Caco-2 (cell line): ENCODE measurements at regions of chr3 and their contacts with region 1.

Region 1: GRCh38 chr3:5226783-5227182 is 39.3 kb downstream of the EDEM1 start:
- DNase-seq: no peak
- H3K4me3 ChIP-seq: no peak overlapping the region
- H3K4me3 Mint-ChIP-seq: no peak overlapping the region
- H3K27ac Mint-ChIP-seq: no peak overlapping the region
- H3K4me1 ChIP-seq: no peaks in the 10 kb centered on the region
- H3K4me1 Mint-ChIP-seq: peaks cover 6% of the 10 kb centered on the region
- H3K27me3 ChIP-seq: no peaks in the 10 kb centered on the region
- H3K27me3 Mint-ChIP-seq: no peaks in the 10 kb centered on the region
- CTCF ChIP-seq: peak in 1 of 2 experiments; percentile 45

Region 2: GRCh38 chr3:5250467-5251195 is 23.8 kb after region 1 on chr3:
- CTCF ChIA-PET with region 1: no interaction called
- POLR2A ChIA-PET with region 1: no interaction called
- intact Hi-C with region 1: no loop called
- DNase-seq: peak in 1 of 2 experiments; percentile 6
- H3K4me3 ChIP-seq: no peak overlapping the region
- H3K4me3 Mint-ChIP-seq: peak overlapping the region; percentile 66
- H3K27ac Mint-ChIP-seq: no peak overlapping the region
- H3K4me1 ChIP-seq: 0 out of 2 replicates have a peak, but pooled peaks cover 5% of the 10 kb centered on the region
- H3K4me1 Mint-ChIP-seq: no peaks in the 10 kb centered on the region
- H3K27me3 ChIP-seq: no peaks in the 10 kb centered on the region
- H3K27me3 Mint-ChIP-seq: no peaks in the 10 kb centered on the region
- CTCF ChIP-seq: no peak

Region 3: DNA sequence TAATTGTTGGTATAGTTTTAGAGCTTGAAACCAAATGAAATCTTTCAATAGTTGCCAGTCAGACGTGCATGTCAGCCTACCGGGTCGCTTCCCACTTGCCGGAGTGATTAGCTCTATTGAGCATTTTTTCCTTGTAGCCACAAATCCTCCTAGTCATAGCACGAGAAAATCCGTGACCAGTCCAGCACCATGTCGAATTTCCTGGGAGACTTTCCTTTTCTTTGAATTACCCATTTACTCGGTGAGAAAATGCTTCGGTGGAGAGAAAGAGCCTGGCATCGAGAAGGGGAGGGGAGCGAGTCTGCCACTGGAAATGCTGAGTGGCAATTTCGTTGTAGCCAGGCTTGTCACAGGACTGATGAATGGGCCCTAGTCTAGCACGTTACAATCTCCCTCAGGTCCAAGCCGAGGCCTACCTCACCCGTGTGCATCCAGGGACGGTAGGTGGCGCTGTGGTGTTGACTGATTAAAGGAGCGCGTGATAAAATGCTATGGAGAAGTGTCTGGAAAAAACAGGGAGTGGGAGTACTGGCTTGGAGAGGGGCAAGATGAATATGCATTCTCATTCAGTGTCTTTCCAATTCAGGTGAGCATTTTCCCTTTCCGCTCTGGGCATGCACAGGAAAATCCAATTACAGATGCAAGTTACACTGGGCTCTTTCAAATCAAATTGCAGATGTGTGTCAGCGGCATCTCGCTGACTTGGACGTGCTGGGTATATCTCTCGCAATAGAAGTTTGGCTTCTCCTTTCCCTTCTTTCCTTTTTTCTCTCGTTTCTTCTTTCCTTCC is 199.5 kb after region 1 on chr3:
- CTCF ChIA-PET with region 1: no interaction called
- POLR2A ChIA-PET with region 1: no interaction called
- intact Hi-C with region 1: loop called (anchors 10 kb)
- DNase-seq: peak; percentile 70 to 74
- H3K4me3 ChIP-seq: no peak overlapping the region
- H3K4me3 Mint-ChIP-seq: no peak overlapping the region
- H3K27ac Mint-ChIP-seq: no peak overlapping the region
- H3K4me1 ChIP-seq: no peaks in the 10 kb centered on the region
- H3K4me1 Mint-ChIP-seq: no peaks in the 10 kb centered on the region
- H3K27me3 ChIP-seq: no peaks in the 10 kb centered on the region
- H3K27me3 Mint-ChIP-seq: no peaks in the 10 kb centered on the region
- CTCF ChIP-seq: peak; percentile 66 to 72

Region 4: GRCh38 chr3:5731094-5731493 is 504.3 kb after region 1 on chr3:
- CTCF ChIA-PET with region 1: no interaction called
- POLR2A ChIA-PET with region 1: no interaction called
- intact Hi-C with region 1: loop called (anchors 10 kb)
- DNase-seq: peak in 1 of 2 experiments; percentile 3
- H3K4me3 ChIP-seq: no peak overlapping the region
- H3K4me3 Mint-ChIP-seq: no peak overlapping the region
- H3K27ac Mint-ChIP-seq: no peak overlapping the region
- H3K4me1 ChIP-seq: no peaks in the 10 kb centered on the region
- H3K4me1 Mint-ChIP-seq: no peaks in the 10 kb centered on the region
- H3K27me3 ChIP-seq: no peaks in the 10 kb centered on the region
- H3K27me3 Mint-ChIP-seq: no peaks in the 10 kb centered on the region
- CTCF ChIP-seq: no peak